ENCODE measurements at regions of chr15 and their contacts with region 1.

Region 1: DNA sequence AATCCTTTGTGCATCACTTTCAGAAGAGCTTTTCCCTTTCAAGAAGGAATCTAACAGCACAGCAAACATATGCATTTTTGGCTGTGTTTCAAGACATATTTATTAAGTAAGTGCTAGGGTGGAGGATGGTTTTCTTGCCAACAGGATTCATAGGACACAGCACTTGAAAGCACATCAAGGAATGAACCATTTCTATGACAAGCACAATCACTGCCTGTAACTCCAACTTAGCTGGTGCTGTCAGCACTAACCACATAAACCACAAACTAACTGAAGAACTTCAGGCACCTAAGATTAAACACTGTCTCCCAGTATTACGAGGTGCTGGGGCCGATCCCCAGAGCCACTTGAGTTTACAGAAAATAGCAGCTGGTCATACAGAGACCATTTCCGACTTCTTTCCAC is 35.4 kb upstream of the SPRED1 start:
- DNase-seq: peak; percentile 58
- H3K4me3 Mint-ChIP-seq: peak overlapping the region; percentile 39
- H3K27ac Mint-ChIP-seq: peak overlapping the region; percentile 63
- H3K4me1 Mint-ChIP-seq: peaks cover 25% of the 10 kb centered on the region
- H3K27me3 Mint-ChIP-seq: no peaks in the 10 kb centered on the region
- CTCF ChIP-seq: no peak

Region 2: DNA sequence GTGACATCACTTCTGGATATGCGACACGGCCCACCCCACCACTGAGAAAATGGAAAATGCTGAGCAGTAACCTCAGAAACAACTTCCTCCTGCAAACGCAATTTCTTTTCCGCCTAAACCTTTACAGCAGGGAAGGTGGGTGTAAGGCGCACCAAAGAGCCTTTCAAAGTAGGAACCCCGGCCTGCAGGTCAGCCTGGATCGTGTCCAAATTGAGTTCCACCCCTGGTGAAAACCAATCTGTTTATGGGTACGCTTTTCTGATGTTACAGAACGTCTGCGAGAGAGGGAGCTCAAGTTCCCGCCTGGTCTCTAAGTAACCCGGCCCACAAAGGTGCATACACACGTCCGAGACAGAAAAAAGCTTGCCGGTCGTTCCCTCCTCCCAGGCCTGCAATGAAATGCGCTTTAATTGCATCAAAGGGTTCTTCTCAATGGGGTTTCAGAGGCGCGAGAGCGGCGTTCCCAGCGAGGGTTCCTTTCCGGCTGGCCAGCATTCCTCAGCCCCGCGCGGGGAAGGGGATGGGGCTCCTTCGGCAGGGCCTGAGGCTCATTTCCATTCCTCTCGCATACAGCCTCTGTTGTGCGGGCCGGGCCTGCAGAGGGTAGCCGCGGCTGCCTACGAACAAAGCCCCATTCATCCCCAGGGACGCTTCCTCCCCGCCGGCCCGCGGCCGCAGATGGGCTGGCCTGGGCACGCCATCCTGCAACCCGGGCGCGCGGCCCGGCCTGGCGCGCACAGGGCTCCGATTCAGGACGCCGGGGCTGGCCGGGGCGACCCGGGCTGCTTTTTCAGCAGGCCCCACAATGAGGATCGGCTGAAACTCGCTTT is 144.6 kb before region 1 on chr15:
- CTCF ChIA-PET with region 1: interaction called, 3 read pairs
- POLR2A ChIA-PET with region 1: interaction called, 29 read pairs
- intact Hi-C with region 1: no loop called
- DNase-seq: peak; percentile 82
- H3K4me3 Mint-ChIP-seq: peak overlapping the region; percentile 77
- H3K27ac Mint-ChIP-seq: peak overlapping the region; percentile 88
- H3K4me1 Mint-ChIP-seq: peaks cover 18% of the 10 kb centered on the region
- H3K27me3 Mint-ChIP-seq: no peaks in the 10 kb centered on the region
- CTCF ChIP-seq: peak; percentile 21

Region 3: GRCh38 chr15:38129531-38130204 is 87.5 kb before region 1 on chr15:
- CTCF ChIA-PET with region 1: interaction called, 3 read pairs
- POLR2A ChIA-PET with region 1: interaction called, 38 read pairs
- intact Hi-C with region 1: no loop called
- DNase-seq: peak; percentile 99
- H3K4me3 Mint-ChIP-seq: peak overlapping the region; percentile 70
- H3K27ac Mint-ChIP-seq: peak overlapping the region; percentile 76
- H3K4me1 Mint-ChIP-seq: peaks cover 29% of the 10 kb centered on the region
- H3K27me3 Mint-ChIP-seq: no peaks in the 10 kb centered on the region
- CTCF ChIP-seq: no peak

Region 4: DNA sequence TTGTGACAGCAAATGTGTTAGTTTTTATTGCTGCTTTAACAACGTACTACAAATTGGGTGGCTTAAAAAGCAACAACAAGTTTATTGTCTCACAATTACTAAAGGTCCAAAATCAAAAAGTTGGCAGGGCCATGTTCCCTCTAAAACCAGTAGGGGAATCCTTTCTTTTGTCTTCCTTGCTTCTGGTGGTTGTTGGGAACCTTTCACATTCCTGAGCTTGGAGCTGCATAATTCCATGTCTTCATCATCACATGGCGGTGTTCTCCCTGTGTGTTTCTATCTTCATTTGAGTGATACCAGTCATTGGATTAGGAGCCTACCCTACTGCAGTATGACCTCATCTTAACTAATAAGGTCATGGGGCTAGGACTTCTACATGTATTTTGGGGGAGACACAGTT is 42.9 kb after region 1 on chr15:
- CTCF ChIA-PET with region 1: no interaction called
- POLR2A ChIA-PET with region 1: interaction called, 116 read pairs
- intact Hi-C with region 1: no loop called
- DNase-seq: no peak
- H3K4me3 Mint-ChIP-seq: no peak overlapping the region
- H3K27ac Mint-ChIP-seq: no peak overlapping the region
- H3K4me1 Mint-ChIP-seq: peaks cover 27% of the 10 kb centered on the region
- H3K27me3 Mint-ChIP-seq: no peaks in the 10 kb centered on the region
- CTCF ChIP-seq: no peak

Region 5: DNA sequence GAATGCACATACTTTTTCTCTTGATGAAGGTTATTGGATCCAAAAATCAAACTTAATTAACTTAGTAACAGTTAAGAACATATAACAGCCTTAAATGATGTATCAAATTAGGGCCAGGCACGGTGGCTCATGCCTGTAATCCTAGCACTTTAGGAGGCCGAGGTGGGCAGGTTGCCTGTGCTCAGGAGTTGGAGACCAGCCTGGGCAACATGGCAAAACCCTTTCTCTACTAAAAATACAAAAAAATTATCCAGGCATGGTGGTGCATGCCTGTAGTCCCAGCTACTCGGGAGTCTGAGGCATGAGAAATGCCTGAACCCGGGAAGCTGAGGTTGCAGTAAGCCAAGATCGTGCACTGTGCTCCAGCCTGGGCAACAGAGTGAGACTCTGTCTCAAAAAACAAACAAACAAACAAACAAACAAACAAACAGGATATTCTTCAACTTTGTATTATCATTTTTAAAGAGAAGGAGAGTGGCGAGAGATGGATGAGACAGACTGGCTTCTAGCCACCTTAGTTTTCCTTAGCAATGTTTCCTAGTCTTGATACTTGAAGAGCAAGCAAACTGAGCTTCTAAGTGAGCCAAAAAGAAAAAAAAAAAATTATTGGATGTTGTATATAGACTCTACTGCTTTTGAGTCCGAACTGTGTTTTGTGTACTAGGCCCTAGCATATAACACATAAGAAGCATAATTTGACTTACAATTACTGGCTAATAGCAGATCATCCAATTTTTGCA is 49.2 kb after region 1 on chr15:
- CTCF ChIA-PET with region 1: interaction called, 4 read pairs
- POLR2A ChIA-PET with region 1: interaction called, 10 read pairs
- intact Hi-C with region 1: no loop called
- DNase-seq: peak; percentile 42
- H3K4me3 Mint-ChIP-seq: peak overlapping the region; percentile 67
- H3K27ac Mint-ChIP-seq: peak overlapping the region; percentile 73
- H3K4me1 Mint-ChIP-seq: no peaks in the 10 kb centered on the region
- H3K27me3 Mint-ChIP-seq: no peaks in the 10 kb centered on the region
- CTCF ChIP-seq: no peak